ENCODE measurements at regions of chr17 and their contacts with region 1.

Region 1: GRCh38 chr17:17919169-17920107 is 52.8 kb downstream of the TOM1L2 start:
- DNase-seq: peak; percentile 39
- ATAC-seq: peak; percentile 99
- H3K4me3 ChIP-seq: no peak overlapping the region
- H3K27ac ChIP-seq: no peak overlapping the region
- H3K4me1 ChIP-seq: peaks cover 11% of the 10 kb centered on the region
- H3K27me3 ChIP-seq: no peaks in the 10 kb centered on the region
- CTCF ChIP-seq: peak; percentile 76 to 89 (median 87)
- EP300 ChIP-seq: no peak
- POLR2A ChIP-seq: no peak
- RAD21 ChIP-seq: peak; percentile 98

Region 2: DNA sequence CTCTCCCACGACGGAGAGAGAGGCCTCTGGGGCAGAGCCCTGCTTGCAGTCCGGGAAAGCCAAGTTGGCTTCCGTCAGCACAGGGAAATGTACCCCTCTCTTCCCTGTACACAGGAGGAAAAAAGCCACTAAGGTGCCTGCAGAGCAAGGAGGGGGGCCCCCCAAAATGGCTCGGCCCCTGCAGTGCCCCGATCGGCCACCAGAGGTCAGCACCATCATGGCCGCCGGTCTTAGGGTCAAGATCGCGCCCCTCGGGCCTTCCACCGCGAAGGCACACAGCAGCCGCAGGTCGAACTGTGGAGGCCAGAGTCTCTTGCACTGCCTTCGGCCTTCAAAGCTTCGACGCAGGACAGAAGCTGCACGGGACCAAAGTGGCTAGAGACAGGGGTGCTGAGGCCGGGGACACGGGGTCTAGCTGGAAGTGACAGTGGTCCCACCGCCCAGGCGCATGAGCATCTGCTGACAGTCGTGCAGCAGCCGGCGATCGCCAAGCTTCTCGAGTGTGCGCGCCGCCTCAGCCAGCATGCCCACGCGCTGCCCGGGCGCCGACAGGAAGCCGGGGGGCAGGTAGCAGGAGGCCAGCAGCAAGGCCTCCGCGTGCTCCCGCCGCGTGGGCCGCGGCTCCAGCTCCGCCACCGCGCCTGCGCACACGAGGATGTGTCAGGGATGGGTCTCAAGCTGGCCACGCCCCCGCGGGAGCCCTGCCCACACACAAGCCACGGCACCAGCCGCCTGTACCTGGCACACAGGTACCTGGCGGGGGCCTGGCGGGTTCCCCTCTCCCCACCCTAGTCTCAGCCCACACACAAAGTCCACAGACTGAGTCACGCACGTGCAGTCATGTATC is 107.0 kb before region 1 on chr17:
- CTCF ChIA-PET with region 1: interaction called, 20 read pairs
- POLR2A ChIA-PET with region 1: no interaction called
- RAD21 ChIA-PET with region 1: interaction called, 10 read pairs
- SMC1A ChIA-PET with region 1: interaction called, 6 read pairs
- in situ Hi-C with region 1: loop called (anchors 5 kb)
- intact Hi-C with region 1: loop called (anchors 1 kb)
- DNase-seq: no peak
- ATAC-seq: peak; percentile 77
- H3K4me3 ChIP-seq: no peak overlapping the region
- H3K27ac ChIP-seq: no peak overlapping the region
- H3K4me1 ChIP-seq: peaks cover 8% of the 10 kb centered on the region
- H3K27me3 ChIP-seq: no peaks in the 10 kb centered on the region
- CTCF ChIP-seq: peak; percentile 97 to 99 (median 98); a peak in 5 of 6 replicates
- EP300 ChIP-seq: no peak
- POLR2A ChIP-seq: no peak
- RAD21 ChIP-seq: peak; percentile 74

Region 3: DNA sequence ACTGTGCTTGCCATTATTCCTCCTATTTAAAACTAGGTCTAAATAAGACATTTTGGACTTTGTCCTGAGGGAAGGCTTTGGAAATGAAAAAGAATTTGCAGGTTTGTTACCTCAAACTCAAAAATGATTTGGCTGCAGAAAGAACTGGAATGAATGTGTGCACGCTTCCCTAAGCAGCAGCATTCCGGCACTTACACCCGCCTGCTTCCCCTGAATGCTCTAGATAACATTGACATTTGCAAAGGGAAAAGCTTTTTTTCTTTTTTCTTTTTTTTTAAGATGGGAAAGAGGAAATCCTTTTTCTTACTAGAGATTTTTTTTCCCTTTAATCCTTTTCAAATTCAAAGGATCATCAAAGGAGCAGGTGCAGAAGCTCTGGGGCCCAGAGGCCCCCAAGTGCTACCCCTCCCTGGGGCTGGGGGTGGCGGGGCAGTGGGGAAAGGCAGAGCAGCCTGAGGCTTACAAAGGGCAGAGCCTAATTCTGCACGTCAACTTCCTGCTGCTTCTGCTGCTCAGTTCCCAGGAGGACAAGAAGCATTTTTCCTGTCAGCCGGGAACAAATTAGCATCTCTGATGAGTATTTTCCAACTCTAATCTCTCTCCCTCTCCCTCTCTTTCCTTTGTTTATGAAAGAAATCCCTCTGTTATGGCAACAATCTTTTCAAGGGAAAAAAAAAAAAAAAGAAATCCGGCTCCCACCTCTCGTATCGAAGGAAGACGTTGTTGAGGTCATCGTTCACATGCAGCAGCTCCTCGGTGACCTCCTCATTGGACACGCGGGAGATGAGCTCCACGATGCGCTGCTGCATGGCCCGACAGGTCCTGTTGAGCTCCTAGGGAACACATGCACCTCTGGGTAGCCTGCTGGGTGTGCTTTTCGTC is 50.6 kb before region 1 on chr17:
- CTCF ChIA-PET with region 1: interaction called, 16 read pairs
- POLR2A ChIA-PET with region 1: no interaction called
- RAD21 ChIA-PET with region 1: interaction called, 9 read pairs
- SMC1A ChIA-PET with region 1: interaction called, 8 read pairs
- in situ Hi-C with region 1: no loop called
- intact Hi-C with region 1: loop called (anchors 5 kb)
- DNase-seq: no peak
- ATAC-seq: no peak
- H3K4me3 ChIP-seq: no peak overlapping the region
- H3K27ac ChIP-seq: no peak overlapping the region
- H3K4me1 ChIP-seq: no peaks in the 10 kb centered on the region
- H3K27me3 ChIP-seq: no peaks in the 10 kb centered on the region
- CTCF ChIP-seq: no peak
- EP300 ChIP-seq: no peak
- POLR2A ChIP-seq: no peak
- RAD21 ChIP-seq: no peak

Region 4: GRCh38 chr17:17900615-17901520 is 18.6 kb before region 1 on chr17:
- CTCF ChIA-PET with region 1: interaction called, 22 read pairs
- POLR2A ChIA-PET with region 1: interaction called, 8 read pairs
- RAD21 ChIA-PET with region 1: interaction called, 16 read pairs
- SMC1A ChIA-PET with region 1: interaction called, 27 read pairs
- in situ Hi-C with region 1: no loop called
- intact Hi-C with region 1: loop called (anchors 2 kb)
- DNase-seq: no peak
- ATAC-seq: no peak
- H3K4me3 ChIP-seq: no peak overlapping the region
- H3K27ac ChIP-seq: no peak overlapping the region
- H3K4me1 ChIP-seq: peaks cover 25% of the 10 kb centered on the region
- H3K27me3 ChIP-seq: no peaks in the 10 kb centered on the region
- CTCF ChIP-seq: no peak
- EP300 ChIP-seq: no peak
- POLR2A ChIP-seq: no peak
- RAD21 ChIP-seq: no peak

Region 5: DNA sequence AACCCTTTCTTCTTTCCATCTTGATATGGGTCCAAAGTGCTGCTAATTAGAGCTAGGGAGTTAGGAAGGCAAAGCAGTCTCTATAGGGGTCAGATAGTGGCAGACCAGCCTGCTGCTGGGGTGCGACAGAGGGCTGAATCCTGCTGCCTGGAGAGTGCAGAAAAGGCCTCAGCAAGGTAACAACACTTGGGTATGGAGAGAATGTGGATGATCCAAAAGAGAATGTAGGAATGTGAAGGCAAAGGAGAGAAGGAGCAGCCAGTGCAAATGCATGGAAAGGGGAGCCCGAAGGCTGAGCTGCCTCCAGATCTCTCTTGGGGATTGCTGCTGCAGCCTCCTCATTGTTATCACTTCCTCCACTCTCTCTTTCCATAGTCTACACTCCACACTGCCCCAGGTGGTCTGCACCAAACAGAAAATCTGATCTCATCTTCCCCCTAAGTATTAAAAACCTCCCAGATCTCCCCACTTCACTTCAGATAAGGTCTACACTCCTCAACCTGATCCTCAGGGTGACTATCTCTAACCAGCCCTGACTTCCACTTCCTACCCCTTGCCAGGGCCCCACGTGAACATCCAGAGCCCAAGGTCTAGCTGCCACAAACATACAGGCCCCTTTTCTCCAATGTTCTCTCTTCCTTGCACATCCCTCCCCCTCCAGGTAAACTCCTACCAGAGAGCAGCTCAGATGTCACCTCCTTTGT is 24.0 kb after region 1 on chr17:
- CTCF ChIA-PET with region 1: interaction called, 13 read pairs
- POLR2A ChIA-PET with region 1: no interaction called
- RAD21 ChIA-PET with region 1: interaction called, 6 read pairs
- SMC1A ChIA-PET with region 1: interaction called, 4 read pairs
- in situ Hi-C with region 1: no loop called
- intact Hi-C with region 1: no loop called
- DNase-seq: no peak
- ATAC-seq: no peak; the same call in 2 of the 3 replicates
- H3K4me3 ChIP-seq: no peak overlapping the region
- H3K27ac ChIP-seq: no peak overlapping the region
- H3K4me1 ChIP-seq: peaks cover 5% of the 10 kb centered on the region; the same call in 1 of the 2 replicates
- H3K27me3 ChIP-seq: no peaks in the 10 kb centered on the region
- CTCF ChIP-seq: no peak
- EP300 ChIP-seq: no peak
- POLR2A ChIP-seq: no peak
- RAD21 ChIP-seq: no peak

Region 6: GRCh38 chr17:18033442-18034099 is 114.1 kb after region 1 on chr17:
- CTCF ChIA-PET with region 1: interaction called, 35 read pairs
- POLR2A ChIA-PET with region 1: interaction called, 3 read pairs
- RAD21 ChIA-PET with region 1: interaction called, 14 read pairs
- SMC1A ChIA-PET with region 1: interaction called, 15 read pairs
- in situ Hi-C with region 1: no loop called
- intact Hi-C with region 1: no loop called
- DNase-seq: peak; percentile 67
- ATAC-seq: peak; percentile 89
- H3K4me3 ChIP-seq: no peak overlapping the region
- H3K27ac ChIP-seq: no peak overlapping the region
- H3K4me1 ChIP-seq: peaks cover 16% of the 10 kb centered on the region
- H3K27me3 ChIP-seq: no peaks in the 10 kb centered on the region
- CTCF ChIP-seq: peak; percentile 35 to 92 (median 62); a peak in 5 of 6 replicates
- EP300 ChIP-seq: peak in 1 of 2 experiments; percentile 17; a peak in 1 of 4 replicates
- POLR2A ChIP-seq: no peak
- RAD21 ChIP-seq: peak; percentile 94